Activated naive CD4-positive, alpha-beta T cell treated with anti-CD3 and anti-CD28 coated beads for 36 hours (primary cell): ENCODE measurements at regions of chr7 and their contacts with region 1.

Region 1: GRCh38 chr7:151705636-151706276 is 171.2 kb downstream of the PRKAG2 start:
- DNase-seq: peak; percentile 49
- H3K4me3 Mint-ChIP-seq: no peak overlapping the region
- H3K27ac Mint-ChIP-seq: no peak overlapping the region
- H3K4me1 Mint-ChIP-seq: peaks cover 6% of the 10 kb centered on the region
- H3K27me3 Mint-ChIP-seq: no peaks in the 10 kb centered on the region

Region 2: DNA sequence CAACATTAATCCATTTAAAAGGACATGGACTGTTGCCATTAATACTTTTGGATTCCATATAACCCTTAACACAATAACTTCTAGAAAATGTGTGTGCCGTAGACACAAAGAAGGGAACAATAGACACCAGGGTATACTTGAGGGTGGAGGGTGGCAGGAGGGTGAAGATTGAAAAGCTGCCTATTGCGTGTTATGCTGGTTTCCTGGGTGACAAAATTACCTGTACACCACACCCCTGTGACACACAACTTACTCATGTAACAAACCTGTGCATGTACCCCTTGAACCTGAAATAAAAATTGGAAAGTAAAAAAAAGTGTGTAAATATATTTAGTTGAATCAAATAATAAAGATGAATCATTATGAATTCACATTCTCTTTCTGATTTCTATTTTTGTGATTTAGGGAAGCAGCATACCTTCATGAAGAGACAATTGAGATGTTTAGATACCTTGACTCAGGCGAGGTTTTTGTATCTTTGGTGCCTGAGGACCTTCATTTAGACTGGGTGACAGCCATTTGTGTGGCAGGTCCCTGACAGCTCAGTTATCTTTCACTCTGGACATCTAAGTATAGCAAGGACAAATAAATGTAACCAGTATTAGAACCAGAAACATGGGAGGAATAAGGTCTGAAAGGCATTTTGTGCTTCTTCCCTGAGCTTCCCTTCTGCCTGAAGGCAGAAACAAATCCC is 1226.6 kb before region 1 on chr7:
- CTCF ChIA-PET with region 1: no interaction called
- intact Hi-C with region 1: no loop called
- DNase-seq: peak; percentile 60
- H3K4me3 Mint-ChIP-seq: peak overlapping the region; percentile 55
- H3K27ac Mint-ChIP-seq: peak overlapping the region; percentile 97
- H3K4me1 Mint-ChIP-seq: peaks cover 88% of the 10 kb centered on the region
- H3K27me3 Mint-ChIP-seq: no peaks in the 10 kb centered on the region

Region 3: GRCh38 chr7:151570366-151570915 is 135.3 kb before region 1 on chr7:
- CTCF ChIA-PET with region 1: no interaction called
- intact Hi-C with region 1: loop called (anchors 5 kb)
- DNase-seq: no peak
- H3K4me3 Mint-ChIP-seq: no peak overlapping the region
- H3K27ac Mint-ChIP-seq: no peak overlapping the region
- H3K4me1 Mint-ChIP-seq: no peaks in the 10 kb centered on the region
- H3K27me3 Mint-ChIP-seq: no peaks in the 10 kb centered on the region

Region 4: DNA sequence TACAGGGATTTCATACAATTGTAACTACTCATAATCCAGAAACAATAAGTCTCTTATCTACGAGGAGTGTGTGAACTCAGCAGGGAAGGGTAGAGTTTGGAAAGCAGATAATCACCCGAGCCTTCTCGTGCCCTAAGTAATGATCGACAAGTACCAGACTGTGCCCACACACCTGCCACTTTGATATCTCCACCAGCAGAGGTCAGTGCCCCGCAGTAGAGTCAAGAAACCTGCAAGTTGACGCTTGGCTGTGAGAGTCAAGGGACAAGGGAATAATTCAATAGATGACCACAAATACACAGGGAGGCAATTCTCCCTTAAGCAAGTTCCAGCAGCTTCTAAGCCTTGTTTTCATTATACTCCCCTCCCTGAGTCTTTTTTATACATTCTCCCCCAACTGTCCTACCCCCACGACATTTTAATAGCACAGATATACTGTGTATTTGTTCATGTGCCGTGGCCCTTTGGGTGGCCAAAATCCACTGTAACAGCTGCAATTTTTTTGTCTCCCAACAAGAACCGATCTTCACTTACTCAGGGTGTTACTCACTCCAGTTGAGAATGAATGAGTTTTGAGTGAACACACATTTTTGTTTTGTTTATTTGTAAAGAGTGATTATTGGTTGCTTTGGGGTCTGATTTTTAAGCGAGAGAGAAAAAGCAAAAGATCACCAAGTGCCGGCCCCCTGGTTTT is 79.2 kb before region 1 on chr7:
- CTCF ChIA-PET with region 1: interaction called, 4 read pairs
- intact Hi-C with region 1: loop called (anchors 1 kb)
- DNase-seq: peak; percentile 62
- H3K4me3 Mint-ChIP-seq: no peak overlapping the region
- H3K27ac Mint-ChIP-seq: no peak overlapping the region
- H3K4me1 Mint-ChIP-seq: peaks cover 40% of the 10 kb centered on the region
- H3K27me3 Mint-ChIP-seq: no peaks in the 10 kb centered on the region